ENCODE measurements at regions of chr10 and their contacts with region 1.

Region 1: GRCh38 chr10:62748386-62748785 is 56.1 kb upstream of the ADO start:
- DNase-seq: no peak
- ATAC-seq: no peak
- H3K4me3 Mint-ChIP-seq: no peak overlapping the region
- H3K27ac Mint-ChIP-seq: peak overlapping the region; percentile 82
- H3K4me1 Mint-ChIP-seq: peaks cover 27% of the 10 kb centered on the region
- H3K27me3 Mint-ChIP-seq: no peaks in the 10 kb centered on the region

Region 2: DNA sequence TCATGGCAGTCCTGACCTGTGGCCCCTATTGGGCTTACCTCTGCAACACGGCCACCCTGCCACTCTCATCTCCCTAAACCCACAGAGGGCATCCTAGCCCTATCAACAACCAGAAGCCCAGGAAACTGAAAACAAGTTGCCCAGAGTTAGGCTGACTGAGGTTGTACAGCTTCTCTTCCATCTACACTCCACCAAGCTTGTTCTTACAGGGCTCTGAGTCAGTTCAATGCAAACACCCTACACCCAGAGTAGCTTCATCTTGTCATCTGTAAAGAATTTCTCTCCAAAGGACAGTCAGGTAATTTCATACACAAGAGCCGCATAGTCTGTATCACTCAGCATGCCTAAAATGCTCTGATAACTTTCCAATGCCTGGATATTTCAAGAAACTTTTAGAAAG is 671.5 kb before region 1 on chr10:
- CTCF ChIA-PET with region 1: no interaction called
- POLR2A ChIA-PET with region 1: no interaction called
- intact Hi-C with region 1: no loop called
- DNase-seq: no peak
- ATAC-seq: peak; percentile 47
- H3K4me3 Mint-ChIP-seq: peak overlapping the region; percentile 3
- H3K27ac Mint-ChIP-seq: peak overlapping the region; percentile 52
- H3K4me1 Mint-ChIP-seq: peaks cover 91% of the 10 kb centered on the region
- H3K27me3 Mint-ChIP-seq: no peaks in the 10 kb centered on the region

Region 3: GRCh38 chr10:62760401-62760800 is 12.0 kb after region 1 on chr10:
- CTCF ChIA-PET with region 1: interaction called, 10 read pairs
- POLR2A ChIA-PET with region 1: interaction called, 5 read pairs
- intact Hi-C with region 1: no loop called
- DNase-seq: no peak
- ATAC-seq: no peak
- H3K4me3 Mint-ChIP-seq: no peak overlapping the region
- H3K27ac Mint-ChIP-seq: no peak overlapping the region
- H3K4me1 Mint-ChIP-seq: peaks cover 19% of the 10 kb centered on the region
- H3K27me3 Mint-ChIP-seq: no peaks in the 10 kb centered on the region

Region 4: DNA sequence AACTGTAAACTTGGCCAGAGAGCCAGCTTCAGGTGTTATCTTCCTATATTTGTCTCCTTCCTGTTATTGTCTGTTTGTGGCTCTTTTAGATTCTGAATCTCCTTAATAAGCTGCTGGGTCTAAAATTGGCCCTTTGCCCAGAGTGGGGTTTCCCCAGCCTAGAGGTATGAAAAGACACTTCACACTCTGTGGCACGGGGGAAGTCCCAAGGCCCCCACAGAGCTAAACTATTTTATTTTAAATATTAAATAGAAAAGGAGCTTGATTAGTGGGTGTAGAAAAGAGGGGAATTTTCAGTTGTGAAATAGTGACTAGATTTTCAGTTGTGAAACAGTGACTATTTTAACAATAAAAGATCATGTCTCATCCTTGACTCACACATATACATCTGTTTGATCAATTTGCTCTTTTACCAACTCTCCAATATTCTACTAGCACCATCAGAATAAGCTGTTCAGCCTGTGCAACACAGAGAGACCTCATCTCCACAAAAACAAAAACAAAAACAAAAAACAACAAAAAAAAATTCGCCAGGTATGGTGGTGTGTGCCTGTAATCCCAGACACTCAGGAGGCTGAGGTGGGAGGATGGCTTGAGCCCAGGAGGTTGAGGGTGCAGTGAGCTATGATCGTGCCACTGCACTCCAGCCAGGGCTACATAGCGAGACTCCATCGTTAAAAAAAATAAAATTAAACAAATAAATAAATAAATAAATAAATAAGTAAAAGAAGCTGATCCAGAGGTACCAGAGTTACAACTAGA is 31.3 kb after region 1 on chr10:
- CTCF ChIA-PET with region 1: interaction called, 13 read pairs
- POLR2A ChIA-PET with region 1: interaction called, 13 read pairs
- intact Hi-C with region 1: loop called (anchors 1 kb)
- DNase-seq: peak; percentile 92
- ATAC-seq: peak; percentile 91
- H3K4me3 Mint-ChIP-seq: no peak overlapping the region
- H3K27ac Mint-ChIP-seq: peak overlapping the region; percentile 80
- H3K4me1 Mint-ChIP-seq: peaks cover 34% of the 10 kb centered on the region
- H3K27me3 Mint-ChIP-seq: peaks cover 4% of the 10 kb centered on the region

Region 5: DNA sequence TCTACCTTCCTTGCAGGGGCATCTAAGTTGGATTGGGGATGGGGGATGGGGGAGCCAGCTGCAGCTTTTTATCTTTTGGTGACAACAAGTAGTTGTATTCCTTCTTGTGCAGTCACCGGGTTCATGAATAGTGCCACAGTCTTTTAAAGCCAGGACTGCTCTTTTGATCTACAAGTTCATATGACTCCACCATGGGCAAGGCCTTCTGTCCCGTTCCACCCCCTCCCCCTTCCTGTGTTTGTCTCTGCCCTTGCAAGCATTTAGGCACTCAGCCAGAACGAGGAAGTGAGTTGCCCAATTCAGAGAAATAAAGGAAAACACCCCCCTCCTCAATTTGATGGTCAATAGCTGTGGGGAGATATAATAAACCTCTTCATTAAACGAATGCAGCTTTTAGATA is 112.6 kb after region 1 on chr10:
- CTCF ChIA-PET with region 1: no interaction called
- POLR2A ChIA-PET with region 1: no interaction called
- intact Hi-C with region 1: no loop called
- DNase-seq: no peak
- ATAC-seq: no peak
- H3K4me3 Mint-ChIP-seq: no peak overlapping the region
- H3K27ac Mint-ChIP-seq: peak overlapping the region; percentile 15
- H3K4me1 Mint-ChIP-seq: peaks cover 45% of the 10 kb centered on the region
- H3K27me3 Mint-ChIP-seq: peaks cover 11% of the 10 kb centered on the region

Measured in activated CD4-positive, alpha-beta T cell treated with anti-CD3 and anti-CD28 coated beads for 36 hours (primary cell).